Activated T-helper 2 cell treated with anti-CD3 and anti-CD28 coated beads, Interferon-gamma antibody, Interleukin-2, Interleukin-4, amounts not matched to agents 10 μg/mL and 5 μg/mL and 100 μg/mL, durations not matched to agents 14 hours and 24 hours and 36 hours (primary cell): ENCODE measurements at regions of chr13 and their contacts with region 1.

Region 1: GRCh38 chr13:46831588-46832194 is 34.7 kb upstream of the ESD start:
- DNase-seq: no peak
- H3K4me3 Mint-ChIP-seq: no peak overlapping the region
- H3K27ac Mint-ChIP-seq: no peak overlapping the region
- H3K4me1 Mint-ChIP-seq: no peaks in the 10 kb centered on the region
- H3K27me3 Mint-ChIP-seq: peaks cover 14% of the 10 kb centered on the region

Region 2: GRCh38 chr13:46893798-46894560 is 62.3 kb after region 1 on chr13:
- intact Hi-C with region 1: loop called (anchors 5 kb)
- DNase-seq: peak; percentile 55
- H3K4me3 Mint-ChIP-seq: peak overlapping the region; percentile 72
- H3K27ac Mint-ChIP-seq: no peak overlapping the region
- H3K4me1 Mint-ChIP-seq: peaks cover 14% of the 10 kb centered on the region
- H3K27me3 Mint-ChIP-seq: peaks cover 78% of the 10 kb centered on the region

Region 3: DNA sequence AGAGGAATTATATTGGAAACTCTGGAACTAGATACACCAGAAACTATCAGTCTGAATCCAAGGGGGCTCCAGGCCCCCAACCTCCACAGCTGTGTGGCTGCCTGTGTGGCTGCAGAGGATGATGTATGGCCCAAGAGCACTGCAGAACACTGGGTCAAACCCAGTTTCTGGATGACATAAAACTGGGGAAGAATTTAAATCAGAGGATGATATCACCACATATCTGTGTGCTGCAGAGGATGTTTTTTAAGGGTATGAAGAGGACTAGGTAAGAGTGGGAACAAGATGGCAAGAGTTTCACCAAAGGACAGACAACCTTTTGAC is 942.9 kb after region 1 on chr13:
- intact Hi-C with region 1: loop called (anchors 2 kb)
- DNase-seq: no peak
- H3K4me3 Mint-ChIP-seq: no peak overlapping the region
- H3K27ac Mint-ChIP-seq: no peak overlapping the region
- H3K4me1 Mint-ChIP-seq: no peaks in the 10 kb centered on the region
- H3K27me3 Mint-ChIP-seq: no peaks in the 10 kb centered on the region